Esophagus muscularis mucosa (tissue), 4 donors: ENCODE measurements at regions of chr12 and their contacts with region 1.

Region 1: DNA sequence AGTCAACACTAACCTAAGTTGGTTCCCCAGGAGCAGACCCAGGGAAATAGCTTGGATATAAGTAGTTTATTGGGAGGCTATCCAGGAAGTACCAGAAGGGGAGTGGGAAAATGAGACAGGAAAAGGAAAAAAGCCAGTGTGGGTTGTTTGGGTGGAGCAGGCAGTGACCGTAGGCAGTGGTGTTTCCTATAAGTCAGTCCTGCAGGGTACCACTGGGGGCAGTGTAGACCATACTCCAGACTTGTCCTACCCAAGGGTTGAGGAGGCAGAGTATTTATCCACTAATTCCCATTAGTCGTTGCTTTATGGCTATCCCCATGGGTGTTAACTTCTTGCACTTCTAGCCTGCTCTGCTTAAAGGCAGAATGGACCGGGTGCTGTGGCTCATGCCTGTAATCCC is 6.4 kb upstream of the CCDC60 start:
- DNase-seq: no peak
- H3K4me3 ChIP-seq: no peak overlapping the region
- H3K27ac ChIP-seq: peak overlapping the region; percentile 79 to 84 (median 82)
- H3K4me1 ChIP-seq: peaks cover 12 to 35% (median 31%) of the 10 kb centered on the region in 4 donors
- H3K27me3 ChIP-seq: no peaks in the 10 kb centered on the region
- CTCF ChIP-seq: peak; percentile 47 to 57 (median 51)
- EP300 ChIP-seq: no peak
- POLR2A ChIP-seq: no peak

Region 2: DNA sequence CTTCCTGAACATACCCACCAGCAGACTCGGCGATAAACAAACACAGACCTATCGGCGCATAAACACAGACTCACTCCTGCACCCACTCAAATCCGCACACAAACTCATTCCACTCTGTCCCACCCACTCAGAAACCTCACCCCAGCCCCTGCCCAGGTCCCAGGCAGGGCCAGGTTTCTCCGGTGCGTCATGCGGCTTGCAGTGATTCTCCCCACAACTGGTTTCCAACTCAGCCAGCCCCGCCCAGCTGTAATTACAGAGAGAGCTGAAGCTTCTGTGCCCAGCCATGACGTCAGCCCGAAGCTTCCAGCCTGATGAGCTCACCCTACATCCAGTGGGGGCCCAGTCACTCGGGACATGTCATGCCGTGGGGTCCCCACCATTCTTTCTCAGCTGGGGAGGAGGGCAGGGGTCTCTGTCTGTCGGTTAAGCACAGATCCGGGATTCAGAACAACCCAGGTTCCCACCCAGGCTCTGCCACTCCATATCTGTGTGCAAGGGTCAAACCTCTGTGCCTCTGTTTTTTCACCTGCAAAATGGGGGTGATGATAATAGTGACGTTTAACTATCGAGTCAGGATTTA is 151.8 kb before region 1 on chr12:
- intact Hi-C with region 1: loop called (anchors 5 kb)
- DNase-seq: peak; percentile 97
- H3K4me3 ChIP-seq: peak overlapping the region; percentile 42 to 55 (median 46)
- H3K27ac ChIP-seq: peak overlapping the region; percentile 86 to 98 (median 96)
- H3K4me1 ChIP-seq: peaks cover 24 to 46% (median 27%) of the 10 kb centered on the region in 4 donors
- H3K27me3 ChIP-seq: peaks cover 0 to 5% (median 2%) of the 10 kb centered on the region in 4 donors
- CTCF ChIP-seq: no peak
- EP300 ChIP-seq: peak; percentile 41
- POLR2A ChIP-seq: no peak

Region 3: DNA sequence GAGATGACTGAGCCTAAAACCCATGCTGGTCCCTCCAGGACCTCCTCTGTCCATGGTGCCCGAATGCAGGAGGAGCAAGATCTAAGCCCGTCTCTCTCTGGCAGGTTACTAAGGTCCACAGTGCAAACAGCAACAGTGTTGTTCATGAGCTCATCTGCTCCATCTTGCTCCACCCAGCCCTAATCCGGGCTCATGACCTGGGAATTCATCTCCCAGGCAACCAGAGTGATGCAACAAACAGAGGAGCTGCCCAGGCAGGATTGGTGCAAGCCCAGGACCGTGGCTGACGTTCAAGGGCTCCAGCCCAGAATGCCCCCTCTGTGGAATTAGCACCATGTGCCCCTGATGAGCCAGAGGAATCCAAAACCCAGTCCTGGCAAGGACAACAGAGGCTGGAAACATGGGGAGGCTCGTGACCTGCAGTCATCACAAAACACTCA is 119.5 kb before region 1 on chr12:
- intact Hi-C with region 1: loop called (anchors 10 kb)
- DNase-seq: peak; percentile 95
- H3K4me3 ChIP-seq: no peak overlapping the region
- H3K27ac ChIP-seq: peak overlapping the region; percentile 81 to 86 (median 83)
- H3K4me1 ChIP-seq: peaks cover 33 to 59% (median 50%) of the 10 kb centered on the region in 4 donors
- H3K27me3 ChIP-seq: no peaks in the 10 kb centered on the region
- CTCF ChIP-seq: no peak
- EP300 ChIP-seq: peak; percentile 58
- POLR2A ChIP-seq: no peak

Region 4: GRCh38 chr12:119341020-119341419 is 12.9 kb after region 1 on chr12:
- intact Hi-C with region 1: no loop called
- DNase-seq: no peak
- H3K4me3 ChIP-seq: no peak overlapping the region
- H3K27ac ChIP-seq: no peak overlapping the region
- H3K4me1 ChIP-seq: no peaks in the 10 kb centered on the region
- H3K27me3 ChIP-seq: peaks cover 0 to 3% (median 0%) of the 10 kb centered on the region in 4 donors
- CTCF ChIP-seq: no peak
- EP300 ChIP-seq: no peak
- POLR2A ChIP-seq: no peak

Region 5: DNA sequence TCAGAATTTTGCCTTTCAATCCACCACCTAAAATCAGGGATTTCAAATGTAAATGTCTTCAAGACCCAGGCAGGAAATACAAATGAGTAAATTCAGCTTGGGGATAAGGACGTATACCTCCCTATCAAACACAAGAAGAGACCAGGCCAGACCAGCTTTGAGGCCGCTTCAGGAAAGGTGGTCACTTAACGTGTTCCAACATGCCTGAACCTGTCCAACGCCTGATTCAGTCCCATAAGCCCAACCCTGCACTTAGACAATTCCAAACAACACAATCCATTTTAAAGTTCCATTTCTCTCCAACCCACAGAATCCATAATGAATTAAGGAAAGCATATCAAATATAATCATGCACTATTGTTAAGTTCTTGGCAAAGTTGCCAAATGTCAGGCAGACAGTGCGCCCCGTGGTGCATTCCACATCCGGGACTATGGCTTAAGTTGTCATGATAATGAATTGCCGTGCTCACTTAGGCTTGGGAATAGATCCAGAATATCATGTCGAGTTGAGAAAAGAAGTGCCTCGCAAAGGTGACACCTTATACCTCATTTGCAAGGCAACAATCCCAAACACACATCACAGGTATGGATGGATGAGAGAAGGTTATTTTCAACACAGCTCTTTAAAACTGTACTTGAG is 41.9 kb after region 1 on chr12:
- intact Hi-C with region 1: loop called (anchors 5 kb)
- DNase-seq: no peak
- H3K4me3 ChIP-seq: no peak overlapping the region
- H3K27ac ChIP-seq: peak overlapping the region; percentile 74 to 80 (median 78)
- H3K4me1 ChIP-seq: peaks cover 40 to 86% (median 70%) of the 10 kb centered on the region in 4 donors
- H3K27me3 ChIP-seq: no peaks in the 10 kb centered on the region
- CTCF ChIP-seq: no peak
- EP300 ChIP-seq: peak; percentile 66
- POLR2A ChIP-seq: no peak

Region 6: GRCh38 chr12:119412811-119413794 is 85.0 kb after region 1 on chr12:
- intact Hi-C with region 1: loop called (anchors 2 kb)
- DNase-seq: peak; percentile 94
- H3K4me3 ChIP-seq: no peak overlapping the region
- H3K27ac ChIP-seq: peak overlapping the region in 3 of 4 donors; percentile 20 to 56 (median 23)
- H3K4me1 ChIP-seq: peaks cover 6 to 38% (median 28%) of the 10 kb centered on the region in 4 donors
- H3K27me3 ChIP-seq: no peaks in the 10 kb centered on the region
- CTCF ChIP-seq: peak; percentile 90 to 94 (median 93)
- EP300 ChIP-seq: no peak
- POLR2A ChIP-seq: no peak